ENCODE measurements at regions of chr3 and their contacts with region 1.

Region 1: DNA sequence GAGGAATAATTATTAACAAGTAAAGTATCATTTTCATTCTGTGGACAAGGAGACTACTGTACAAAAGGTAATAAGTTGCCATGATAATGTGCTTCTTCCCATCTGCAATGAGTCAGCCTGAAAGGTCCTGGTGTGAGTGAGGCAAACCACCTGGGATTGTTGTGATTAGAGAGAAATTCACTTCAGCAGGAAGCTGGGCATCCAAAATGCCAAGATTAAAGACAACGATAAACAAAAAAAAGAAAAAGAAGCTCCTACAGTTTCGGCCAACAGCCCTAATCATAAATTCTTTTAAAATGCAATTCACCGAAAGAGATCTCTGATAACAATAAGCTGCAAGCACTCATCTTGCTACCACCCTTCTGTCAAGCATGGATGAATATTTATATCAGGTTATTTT is 507.8 kb downstream of the TUSC7 start:
- DNase-seq: no peak
- H3K4me3 ChIP-seq: no peak overlapping the region
- H3K27me3 ChIP-seq: no peaks in the 10 kb centered on the region
- CTCF ChIP-seq: no peak

Region 2: GRCh38 chr3:117144853-117145252 is 72.5 kb before region 1 on chr3:
- CTCF ChIA-PET with region 1: no interaction called
- POLR2A ChIA-PET with region 1: interaction called, 10 read pairs
- DNase-seq: no peak
- H3K4me3 ChIP-seq: no peak overlapping the region
- H3K27me3 ChIP-seq: no peaks in the 10 kb centered on the region
- CTCF ChIP-seq: no peak